Psoas muscle (tissue), 8 donors: ENCODE measurements at regions of chr15 and their contacts with region 1.

Region 1: DNA sequence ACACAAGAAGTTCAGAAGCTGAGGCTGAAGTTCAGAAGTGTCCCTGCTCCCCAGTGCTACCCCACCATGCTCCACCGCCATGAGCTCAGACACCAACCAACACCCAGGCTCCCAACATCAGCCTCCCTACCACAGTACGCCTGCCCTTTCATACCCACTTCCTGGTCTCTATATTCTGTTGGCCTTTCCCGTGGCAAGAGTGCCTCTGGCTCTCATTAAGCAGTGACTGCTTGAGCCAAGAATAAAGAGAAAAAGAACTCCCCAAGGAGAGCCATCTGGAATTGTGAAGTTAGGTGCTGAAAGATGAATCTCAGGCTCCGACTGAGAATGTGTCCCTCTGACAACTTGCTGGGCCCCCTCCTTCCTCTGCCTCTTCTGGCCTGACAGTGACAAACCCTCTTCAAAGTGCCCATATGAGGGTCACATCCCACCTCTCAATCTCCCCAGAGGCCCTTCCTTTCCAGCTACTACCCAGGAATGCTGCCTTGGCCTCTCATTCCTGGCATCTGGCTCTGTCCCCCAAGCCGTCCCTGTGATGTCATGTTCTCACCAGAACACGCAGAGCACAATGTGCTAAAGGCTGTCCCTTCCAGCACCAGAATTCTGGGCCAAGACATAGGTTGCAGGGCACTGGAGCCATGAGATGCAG is 306.8 kb downstream of the NTRK3 start:
- DNase-seq: no peak
- ATAC-seq: peak in 3 of 4 donors; percentile 36 to 58 (median 46)
- H3K4me3 ChIP-seq: no peak overlapping the region
- H3K27ac ChIP-seq: no peak overlapping the region
- H3K4me1 ChIP-seq: peaks cover 11% of the 10 kb centered on the region
- H3K27me3 ChIP-seq: no peaks in the 10 kb centered on the region
- CTCF ChIP-seq: no peak

Region 2: GRCh38 chr15:87015340-87015739 is 934.4 kb before region 1 on chr15:
- intact Hi-C with region 1: no loop called
- DNase-seq: no peak
- ATAC-seq: no peak
- H3K4me3 ChIP-seq: no peak overlapping the region
- H3K27ac ChIP-seq: no peak overlapping the region
- H3K4me1 ChIP-seq: no peaks in the 10 kb centered on the region
- H3K27me3 ChIP-seq: no peaks in the 10 kb centered on the region
- CTCF ChIP-seq: no peak

Region 3: DNA sequence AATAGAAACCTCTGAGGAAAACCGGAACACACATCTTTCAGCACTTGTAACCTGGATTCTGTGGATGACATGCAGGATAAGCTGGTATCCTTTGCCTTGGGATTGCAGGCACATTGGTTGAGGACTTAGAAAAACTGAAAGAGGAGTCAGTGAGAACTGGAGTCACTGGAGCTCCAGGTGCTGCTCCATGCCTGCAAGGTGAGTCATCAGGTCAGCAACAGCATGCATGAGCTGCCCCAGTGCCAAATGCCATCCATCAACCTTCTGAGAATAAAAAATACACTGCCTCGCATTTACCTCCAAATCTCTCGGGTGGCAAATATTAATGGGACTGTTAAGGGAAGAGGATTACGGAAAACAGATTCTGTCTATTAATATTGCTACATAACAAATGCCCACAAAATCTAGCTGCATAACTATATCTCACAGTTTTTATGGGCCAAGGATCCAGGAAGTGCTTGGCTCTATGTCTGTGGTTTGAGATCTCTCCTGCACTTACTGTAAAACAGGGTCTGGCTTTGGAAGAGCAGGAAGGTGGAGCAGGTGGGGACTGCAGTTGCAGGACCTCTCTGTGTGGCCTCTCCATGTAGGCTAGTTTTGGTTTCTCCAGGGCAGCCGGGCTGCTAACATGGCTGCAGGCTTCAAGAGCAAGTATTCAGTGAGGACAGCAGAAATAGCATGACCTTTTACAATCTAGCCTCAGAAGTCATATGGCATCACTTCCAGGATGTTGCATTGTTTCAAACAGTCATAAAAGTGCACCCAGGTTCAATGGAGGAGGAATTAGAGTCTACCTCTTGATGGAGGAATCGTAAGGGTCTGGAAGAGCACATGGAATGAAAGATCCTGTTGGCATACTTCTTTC is 422.1 kb before region 1 on chr15:
- intact Hi-C with region 1: loop called in 1 of 2 experiments (anchors 5 kb)
- DNase-seq: no peak
- ATAC-seq: peak in 3 of 4 donors; percentile 44 to 82 (median 54)
- H3K4me3 ChIP-seq: no peak overlapping the region
- H3K27ac ChIP-seq: no peak overlapping the region
- H3K4me1 ChIP-seq: no peaks in the 10 kb centered on the region
- H3K27me3 ChIP-seq: no peaks in the 10 kb centered on the region
- CTCF ChIP-seq: no peak

Region 4: DNA sequence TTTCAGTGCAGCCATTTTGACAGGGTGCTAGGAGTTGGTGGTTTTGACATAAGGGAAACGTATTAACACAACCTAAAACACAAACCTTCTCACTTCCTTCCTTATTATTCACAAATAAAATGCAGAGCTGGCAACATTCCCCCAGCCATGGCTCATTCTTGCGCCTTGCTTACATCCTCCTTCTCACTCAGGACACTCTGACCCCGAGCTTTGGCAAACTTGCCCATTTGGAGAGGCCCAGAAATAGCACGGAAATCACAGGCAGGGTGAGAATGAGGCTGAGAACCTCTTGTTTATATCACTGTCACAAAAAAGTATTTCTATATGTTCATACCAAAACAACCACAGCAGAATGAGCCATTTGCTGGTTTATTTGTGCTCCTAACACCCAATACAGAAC is 62.5 kb after region 1 on chr15:
- intact Hi-C with region 1: no loop called
- DNase-seq: no peak
- ATAC-seq: no peak
- H3K4me3 ChIP-seq: no peak overlapping the region
- H3K27ac ChIP-seq: no peak overlapping the region
- H3K4me1 ChIP-seq: no peaks in the 10 kb centered on the region
- H3K27me3 ChIP-seq: no peaks in the 10 kb centered on the region
- CTCF ChIP-seq: no peak